Aorta (tissue), 5 donors: ENCODE measurements at regions of chr1 and their contacts with region 1.

Region 1: DNA sequence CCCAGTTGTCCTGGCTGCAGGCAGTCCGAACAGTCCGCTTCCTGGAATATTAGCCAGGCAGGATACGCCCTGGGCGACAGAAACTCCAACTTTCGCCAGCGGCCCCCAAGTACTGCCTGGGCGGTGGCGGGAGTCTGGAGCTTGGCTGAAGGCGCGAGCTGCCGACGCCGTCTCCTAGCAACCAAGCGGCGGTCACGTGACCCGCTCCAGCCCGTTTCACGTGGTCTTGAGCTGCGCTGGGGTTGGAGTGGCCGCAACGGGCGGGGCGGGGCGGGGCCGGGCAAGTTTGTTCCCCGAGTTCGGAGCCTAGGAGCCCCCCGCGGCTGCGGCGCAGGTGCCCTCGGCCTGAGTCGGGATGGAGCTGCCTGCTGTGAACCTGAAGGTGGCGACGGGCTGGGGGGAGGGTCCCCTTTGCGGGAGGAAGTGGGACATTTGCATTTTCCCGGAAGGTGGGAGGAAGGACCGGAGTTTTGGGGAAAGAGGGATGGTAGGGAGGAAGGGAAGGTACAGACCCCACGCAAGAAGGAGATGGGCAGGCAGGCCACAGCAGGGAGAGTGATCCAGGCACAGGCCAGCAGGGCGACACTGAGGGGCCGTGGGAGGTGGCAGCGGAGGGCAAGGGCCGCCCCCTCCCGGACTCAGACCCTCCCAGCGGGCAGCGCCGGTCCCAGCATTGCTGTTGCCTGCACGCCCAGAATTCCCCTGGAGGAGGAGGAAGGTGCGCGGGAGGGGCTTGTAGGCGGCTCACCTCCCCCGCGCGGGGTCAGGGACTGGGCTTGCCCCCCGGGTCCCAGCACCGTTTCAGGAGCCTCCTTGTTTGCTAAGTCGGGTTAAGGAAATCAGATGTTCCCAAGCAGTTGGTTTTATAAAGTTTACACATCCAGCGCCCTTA is at the start of gene AGTRAP:
- DNase-seq: peak; percentile 98 to 99
- ATAC-seq: peak; percentile 95
- H3K4me3 ChIP-seq: peak within 1 kb of the TSS; percentile 69
- H3K27ac ChIP-seq: peak within 1 kb of the TSS; percentile 19 to 55
- H3K4me1 ChIP-seq: no peaks in the 10 kb centered on the region
- H3K27me3 ChIP-seq: no peaks in the 10 kb centered on the region
- total RNA-seq, gene AGTRAP: 33.4 to 40.3 TPM

Region 2: DNA sequence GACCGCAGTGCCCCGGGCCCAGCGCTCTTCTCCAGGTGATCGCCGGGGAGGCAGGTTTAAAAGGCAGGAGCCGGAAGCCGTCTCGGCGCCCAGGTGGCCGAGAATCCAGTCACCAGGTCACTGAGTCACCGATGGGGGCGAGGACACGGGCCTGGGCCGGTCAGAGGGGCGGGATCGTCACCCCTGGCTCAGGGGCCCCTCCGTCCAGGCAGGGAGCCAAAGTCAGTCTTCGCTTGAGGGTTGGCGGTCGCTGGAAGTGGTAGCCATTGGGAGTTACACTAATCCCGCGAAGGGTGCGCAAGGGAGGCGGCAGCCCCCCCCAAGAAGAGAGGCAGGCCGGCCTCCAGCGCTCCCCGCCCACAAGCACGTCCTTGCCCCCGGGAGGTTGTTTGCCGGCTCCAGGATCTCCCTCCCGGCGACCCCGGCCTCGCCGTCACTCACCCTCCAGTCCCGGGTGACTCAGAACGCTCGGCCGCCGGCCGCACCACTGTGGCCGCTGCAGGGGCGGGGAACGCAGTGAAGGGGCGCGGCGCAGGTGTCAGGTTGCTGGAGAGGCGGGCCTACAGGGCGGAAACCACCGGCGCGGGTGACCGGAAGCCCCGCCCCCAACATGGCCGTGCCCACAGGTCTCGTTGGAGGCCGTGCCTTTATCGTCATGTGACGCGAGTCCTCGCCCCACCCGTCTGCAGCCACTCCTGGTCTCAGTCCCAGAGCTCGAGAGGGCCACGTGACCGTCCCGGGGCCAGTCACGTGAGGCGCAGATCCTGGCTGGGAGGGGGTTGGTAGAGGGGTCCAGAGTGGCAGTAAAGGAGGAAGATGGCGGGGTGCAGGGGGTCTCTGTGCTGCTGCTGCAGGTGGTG is 69.6 kb after region 1 on chr1 and contains the starts of genes CLCN6 and MTHFR:
- intact Hi-C with region 1: loop called (anchors 5 kb)
- DNase-seq: peak; percentile 100
- ATAC-seq: peak; percentile 96
- H3K4me3 ChIP-seq: peak within 1 kb of the TSS; percentile 78 to 83
- H3K27ac ChIP-seq: peak within 1 kb of the TSS; percentile 43 to 93
- H3K4me1 ChIP-seq: peaks cover 0 to 3% of the 10 kb centered on the region in 2 donors
- H3K27me3 ChIP-seq: no peaks in the 10 kb centered on the region
- total RNA-seq, gene CLCN6: 25.8 to 37.5 TPM
- total RNA-seq, gene MTHFR: 32.1 to 53.0 TPM